ENCODE measurements at regions of chr15 and their contacts with region 1.

Region 1: GRCh38 chr15:89654847-89655805 is at the start of gene KIF7:
- DNase-seq: peak in 2 of 3 donors; percentile 72 to 79
- ATAC-seq: peak; percentile 86 to 88
- H3K4me3 ChIP-seq: peak within 1 kb of the TSS; percentile 69
- H3K27ac ChIP-seq: no peak within 1 kb of the TSS
- H3K4me1 ChIP-seq: peaks cover 3% of the 10 kb centered on the region
- H3K27me3 ChIP-seq: no peaks in the 10 kb centered on the region
- total RNA-seq, gene KIF7: 3.7 to 6.2 (median 5.5) TPM

Region 2: GRCh38 chr15:89690276-89691218 is 35.4 kb after region 1 on chr15 and contains the starts of genes PEX11A and WDR93:
- intact Hi-C with region 1: loop called in 1 of 4 experiments (anchors 5 kb)
- DNase-seq: peak; percentile 86 to 94 (median 94)
- ATAC-seq: peak; percentile 97
- H3K4me3 ChIP-seq: peak within 1 kb of the TSS; percentile 71
- H3K27ac ChIP-seq: peak within 1 kb of the TSS; percentile 6
- H3K4me1 ChIP-seq: no peaks in the 10 kb centered on the region
- H3K27me3 ChIP-seq: no peaks in the 10 kb centered on the region
- total RNA-seq, gene PEX11A: 8.8 to 10.3 (median 9.3) TPM
- total RNA-seq, gene WDR93: not detected